PC-9 (cell line): ENCODE measurements at regions of chr4 and their contacts with region 1.

Region 1: GRCh38 chr4:140153718-140154571 is at the start of gene MAML3:
- DNase-seq: peak; percentile 74 to 92
- H3K4me3 ChIP-seq: peak within 1 kb of the TSS; percentile 87
- H3K27ac ChIP-seq: peak within 1 kb of the TSS; percentile 100
- H3K4me1 ChIP-seq: peaks cover 19% of the 10 kb centered on the region
- H3K27me3 ChIP-seq: no peaks in the 10 kb centered on the region
- CTCF ChIP-seq: no peak
- total RNA-seq, gene MAML3: 10.5 and 15.2 TPM in 2 replicates

Region 2: GRCh38 chr4:139656614-139657486 is 497.1 kb before region 1 on chr4:
- CTCF ChIA-PET with region 1: no interaction called
- POLR2A ChIA-PET with region 1: no interaction called
- intact Hi-C with region 1: loop called (anchors 5 kb)
- DNase-seq: peak in 1 of 2 experiments; percentile 53
- H3K4me3 ChIP-seq: no peak overlapping the region
- H3K27ac ChIP-seq: no peak overlapping the region
- H3K4me1 ChIP-seq: peaks cover 19% of the 10 kb centered on the region
- H3K27me3 ChIP-seq: no peaks in the 10 kb centered on the region
- CTCF ChIP-seq: peak; percentile 85

Region 3: DNA sequence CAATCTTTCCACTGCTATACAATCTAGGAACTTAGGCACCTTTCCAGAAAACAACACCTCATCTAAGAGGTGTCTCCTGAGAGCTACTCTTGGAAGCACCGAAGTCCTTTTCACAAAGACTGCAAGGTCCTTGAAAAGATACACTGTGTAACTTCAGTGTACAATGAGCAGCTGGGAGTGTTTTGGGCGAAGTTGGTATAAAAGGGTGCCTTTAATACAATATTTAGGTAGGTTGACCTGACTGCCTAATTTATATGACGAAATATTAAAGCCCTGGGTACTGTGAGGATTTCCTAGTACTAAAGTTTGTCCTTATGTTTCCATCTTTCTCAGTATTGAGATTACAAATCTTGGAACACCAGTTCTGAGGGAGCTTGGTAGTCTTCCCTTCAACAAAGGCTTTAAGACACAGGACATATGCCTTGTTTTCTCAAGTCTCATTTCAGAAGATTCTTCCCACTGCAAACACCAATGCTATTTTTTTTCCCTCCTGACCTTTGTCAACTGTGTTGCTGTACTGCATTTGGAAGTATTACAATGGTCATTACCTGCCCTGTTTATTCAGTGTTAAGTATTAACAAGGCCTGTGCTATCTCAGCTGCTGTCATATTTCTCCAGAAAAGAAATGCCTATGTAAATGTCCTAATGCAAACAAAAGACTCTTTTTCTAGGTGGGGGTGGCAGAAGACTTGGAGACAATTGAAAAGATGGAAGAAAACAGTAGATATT is 134.2 kb before region 1 on chr4:
- CTCF ChIA-PET with region 1: no interaction called
- POLR2A ChIA-PET with region 1: interaction called, 3 read pairs
- intact Hi-C with region 1: loop called (anchors 2 kb)
- DNase-seq: peak in 1 of 2 experiments; percentile 48
- H3K4me3 ChIP-seq: no peak overlapping the region
- H3K27ac ChIP-seq: peak overlapping the region; percentile 93
- H3K4me1 ChIP-seq: peaks cover 50% of the 10 kb centered on the region
- H3K27me3 ChIP-seq: no peaks in the 10 kb centered on the region
- CTCF ChIP-seq: no peak

Region 4: GRCh38 chr4:140090215-140090731 is 63.7 kb before region 1 on chr4:
- CTCF ChIA-PET with region 1: no interaction called
- POLR2A ChIA-PET with region 1: interaction called, 5 read pairs
- intact Hi-C with region 1: loop called (anchors 1 kb)
- DNase-seq: peak; percentile 50 to 91
- H3K4me3 ChIP-seq: no peak overlapping the region; the same call in 1 of the 2 replicates
- H3K27ac ChIP-seq: peak overlapping the region; percentile 92
- H3K4me1 ChIP-seq: peaks cover 84% of the 10 kb centered on the region
- H3K27me3 ChIP-seq: no peaks in the 10 kb centered on the region
- CTCF ChIP-seq: no peak

Region 5: DNA sequence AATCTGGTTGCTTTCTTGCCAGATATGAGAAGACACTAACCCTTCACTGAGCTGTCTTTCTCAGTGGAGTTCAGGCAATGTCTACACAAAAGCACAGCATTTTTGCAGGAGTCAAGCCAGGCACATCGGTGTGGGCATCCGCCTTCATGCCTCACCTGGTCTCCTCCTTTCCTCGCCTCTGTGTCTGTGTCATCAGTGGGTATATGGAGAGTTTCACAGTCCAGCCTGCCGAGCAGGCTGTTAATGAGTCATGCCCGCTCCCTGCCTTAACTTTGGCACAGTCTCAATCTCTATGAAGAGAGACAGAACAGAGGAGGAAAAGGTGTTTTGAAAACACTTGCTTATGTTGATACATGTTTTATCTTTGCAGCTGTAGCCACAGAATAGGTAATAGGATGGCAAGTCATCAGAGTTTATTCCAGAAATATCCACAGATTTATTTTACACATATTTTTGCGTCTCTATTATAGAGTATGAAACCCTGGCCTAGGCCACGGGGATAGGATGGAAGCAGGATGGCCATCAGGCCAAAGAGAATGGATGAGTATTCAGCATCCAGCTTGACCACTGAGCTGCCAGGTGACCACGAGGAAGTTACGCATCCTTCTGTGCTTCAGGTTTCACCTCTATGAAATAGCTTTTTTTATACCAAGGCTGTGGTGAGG is 32.8 kb after region 1 on chr4:
- CTCF ChIA-PET with region 1: no interaction called
- POLR2A ChIA-PET with region 1: interaction called, 13 read pairs
- intact Hi-C with region 1: loop called (anchors 2 kb)
- DNase-seq: peak; percentile 68 to 82
- H3K4me3 ChIP-seq: peak overlapping the region; percentile 7; the same call in 1 of the 2 replicates
- H3K27ac ChIP-seq: peak overlapping the region; percentile 87
- H3K4me1 ChIP-seq: peaks cover 47% of the 10 kb centered on the region
- H3K27me3 ChIP-seq: no peaks in the 10 kb centered on the region
- CTCF ChIP-seq: no peak

Region 6: GRCh38 chr4:140326395-140326993 is 172.5 kb after region 1 on chr4:
- CTCF ChIA-PET with region 1: no interaction called
- POLR2A ChIA-PET with region 1: no interaction called
- intact Hi-C with region 1: loop called (anchors 1 kb)
- DNase-seq: peak in 1 of 2 experiments; percentile 25
- H3K4me3 ChIP-seq: no peak overlapping the region
- H3K27ac ChIP-seq: no peak overlapping the region
- H3K4me1 ChIP-seq: no peaks in the 10 kb centered on the region
- H3K27me3 ChIP-seq: no peaks in the 10 kb centered on the region
- CTCF ChIP-seq: peak; percentile 55